ENCODE measurements at regions of chr19 and their contacts with region 1.

Region 1: DNA sequence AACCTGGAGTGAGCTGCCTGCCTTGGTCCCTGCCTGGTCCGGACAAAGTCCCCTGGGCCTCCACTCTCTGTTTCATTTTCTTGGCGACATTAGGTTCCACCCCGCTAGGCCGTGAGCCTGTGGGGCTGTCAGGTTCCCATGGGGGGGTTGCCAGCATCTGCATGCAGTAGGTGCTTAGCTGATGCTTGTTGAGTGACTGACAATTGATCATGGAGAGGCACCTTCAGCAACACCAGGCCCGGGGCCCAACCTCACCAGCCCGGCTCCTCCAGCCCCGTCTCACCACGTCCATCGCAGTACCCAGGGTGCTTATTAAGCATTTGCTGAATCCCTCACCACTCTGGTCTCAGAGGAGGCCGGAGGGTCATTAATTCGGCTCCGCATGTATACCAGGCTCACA is 13.4 kb downstream of the MISP start:
- DNase-seq: no peak
- ATAC-seq: no peak
- H3K4me3 ChIP-seq: no peak overlapping the region
- H3K27ac ChIP-seq: no peak overlapping the region
- H3K4me1 ChIP-seq: peaks cover 0 to 16% of the 10 kb centered on the region in 2 experiments; a peak in 3 of 5 replicates
- H3K27me3 ChIP-seq: no peaks in the 10 kb centered on the region
- CTCF ChIP-seq: no peak
- EP300 ChIP-seq: no peak
- POLR2A ChIP-seq: no peak
- RAD21 ChIP-seq: no peak

Region 2: DNA sequence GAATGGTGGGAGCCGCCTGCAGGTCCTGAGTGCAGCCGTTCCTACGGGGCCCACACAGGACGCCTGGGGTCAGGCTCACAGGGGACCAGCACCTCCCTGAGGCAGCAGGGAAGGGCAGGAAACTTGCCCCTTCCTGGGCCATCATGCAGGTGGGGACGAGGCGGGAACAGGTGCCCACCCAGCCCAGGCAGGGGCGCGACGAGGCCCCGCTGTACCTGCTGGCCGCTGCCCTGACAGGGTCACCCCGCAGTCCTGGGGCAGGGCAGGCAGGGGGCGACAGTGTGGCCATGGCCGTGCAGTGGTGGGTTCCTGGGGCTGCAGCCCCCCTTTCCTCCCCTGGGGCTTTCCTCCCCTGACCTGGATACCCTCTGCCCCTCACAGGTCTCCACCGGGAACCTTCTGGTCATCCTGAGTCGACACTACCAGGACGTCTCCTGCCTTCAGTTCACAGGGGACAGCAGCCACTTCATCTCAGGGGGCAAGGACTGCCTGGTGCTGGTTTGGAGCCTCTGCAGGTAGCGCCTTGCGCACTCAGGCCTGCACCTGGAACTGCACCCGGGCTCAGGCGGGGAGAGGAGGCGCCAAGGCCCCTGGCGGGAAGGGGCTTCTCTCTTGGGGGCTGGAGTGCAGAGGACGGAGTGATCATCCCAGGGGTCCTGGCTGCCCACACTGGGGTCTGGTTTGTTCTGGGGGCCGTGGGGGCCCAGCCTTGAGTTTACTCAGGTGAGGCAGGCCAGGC is 225.2 kb after region 1 on chr19:
- CTCF ChIA-PET with region 1: no interaction called
- POLR2A ChIA-PET with region 1: no interaction called
- in situ Hi-C with region 1: loop called (anchors 5 kb)
- intact Hi-C with region 1: no loop called
- DNase-seq: no peak
- ATAC-seq: peak; percentile 14; the same call in 1 of the 3 replicates
- H3K4me3 ChIP-seq: no peak overlapping the region
- H3K27ac ChIP-seq: no peak overlapping the region
- H3K4me1 ChIP-seq: peaks cover 7 to 79% of the 10 kb centered on the region in 2 experiments; a peak in 4 of 5 replicates
- H3K27me3 ChIP-seq: no peaks in the 10 kb centered on the region
- CTCF ChIP-seq: peak; percentile 23 to 54 (median 24); a peak in 5 of 6 replicates
- EP300 ChIP-seq: no peak
- POLR2A ChIP-seq: 0 out of 2 replicates have a peak, but pooled peaks have one; percentile 43
- RAD21 ChIP-seq: no peak

Measured in K562 (cell line).